ENCODE measurements at regions of chr14 and their contacts with region 1.

Region 1: GRCh38 chr14:89392181-89392580 is 24.9 kb downstream of the FOXN3 start:
- DNase-seq: no peak
- H3K27ac ChIP-seq: no peak overlapping the region
- CTCF ChIP-seq: no peak

Region 2: GRCh38 chr14:89085737-89086382 is 306.3 kb before region 1 on chr14:
- CTCF ChIA-PET with region 1: no interaction called
- POLR2A ChIA-PET with region 1: no interaction called
- DNase-seq: no peak
- H3K27ac ChIP-seq: no peak overlapping the region
- CTCF ChIP-seq: no peak

Region 3: DNA sequence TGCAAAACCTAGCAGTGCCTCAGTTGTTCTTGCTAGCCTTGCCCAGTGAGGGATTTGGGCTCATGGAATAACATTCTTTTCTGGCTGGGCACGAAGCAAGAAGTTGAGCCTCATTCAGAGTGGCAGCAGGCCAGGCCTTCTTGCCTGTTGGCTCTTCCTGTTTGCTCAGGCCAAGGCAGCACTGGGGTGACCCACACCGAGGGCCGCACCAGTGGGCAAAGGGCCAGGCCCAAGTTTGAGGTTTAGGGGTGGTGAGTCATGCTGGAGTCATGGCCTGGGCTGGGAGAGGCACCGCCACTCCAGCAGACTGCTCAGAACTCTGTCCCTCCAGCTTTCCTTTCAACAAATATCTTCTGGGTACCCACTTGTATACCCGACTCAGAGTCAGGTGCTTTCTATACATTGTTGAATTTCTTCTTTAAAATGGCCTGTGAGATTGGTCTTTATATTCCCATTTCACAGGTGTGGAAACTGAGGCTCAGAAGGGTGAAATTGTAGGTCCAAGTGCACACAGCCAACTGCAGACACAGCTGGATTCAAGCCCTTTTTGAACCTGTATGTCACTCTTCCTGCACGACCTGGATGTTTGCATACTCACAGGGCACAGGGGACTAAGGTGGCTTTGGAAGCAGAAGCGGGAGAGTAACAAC is 254.5 kb before region 1 on chr14:
- CTCF ChIA-PET with region 1: no interaction called
- POLR2A ChIA-PET with region 1: interaction called, 13 read pairs
- DNase-seq: peak; percentile 92
- H3K27ac ChIP-seq: peak overlapping the region; percentile 73
- CTCF ChIP-seq: no peak

Measured in RWPE1 (cell line).